Natural killer cell (primary cell): ENCODE measurements at regions of chr2 and their contacts with region 1.

Region 1: GRCh38 chr2:64750817-64751285 is 97.1 kb upstream of the SERTAD2 start:
- DNase-seq: peak; percentile 97 to 99
- ATAC-seq: peak; percentile 77 to 92 (median 81)
- H3K4me3 ChIP-seq: peak overlapping the region; percentile 47
- H3K4me3 Mint-ChIP-seq: peak overlapping the region; percentile 96
- H3K27ac ChIP-seq: peak overlapping the region; percentile 95
- H3K27ac Mint-ChIP-seq: peak overlapping the region; percentile 77 to 96
- H3K4me1 ChIP-seq: peaks cover 5% of the 10 kb centered on the region
- H3K4me1 Mint-ChIP-seq: peaks cover 12 to 16% of the 10 kb centered on the region in 2 donors
- H3K27me3 ChIP-seq: no peaks in the 10 kb centered on the region
- H3K27me3 Mint-ChIP-seq: no peaks in the 10 kb centered on the region
- CTCF ChIP-seq: no peak

Region 2: DNA sequence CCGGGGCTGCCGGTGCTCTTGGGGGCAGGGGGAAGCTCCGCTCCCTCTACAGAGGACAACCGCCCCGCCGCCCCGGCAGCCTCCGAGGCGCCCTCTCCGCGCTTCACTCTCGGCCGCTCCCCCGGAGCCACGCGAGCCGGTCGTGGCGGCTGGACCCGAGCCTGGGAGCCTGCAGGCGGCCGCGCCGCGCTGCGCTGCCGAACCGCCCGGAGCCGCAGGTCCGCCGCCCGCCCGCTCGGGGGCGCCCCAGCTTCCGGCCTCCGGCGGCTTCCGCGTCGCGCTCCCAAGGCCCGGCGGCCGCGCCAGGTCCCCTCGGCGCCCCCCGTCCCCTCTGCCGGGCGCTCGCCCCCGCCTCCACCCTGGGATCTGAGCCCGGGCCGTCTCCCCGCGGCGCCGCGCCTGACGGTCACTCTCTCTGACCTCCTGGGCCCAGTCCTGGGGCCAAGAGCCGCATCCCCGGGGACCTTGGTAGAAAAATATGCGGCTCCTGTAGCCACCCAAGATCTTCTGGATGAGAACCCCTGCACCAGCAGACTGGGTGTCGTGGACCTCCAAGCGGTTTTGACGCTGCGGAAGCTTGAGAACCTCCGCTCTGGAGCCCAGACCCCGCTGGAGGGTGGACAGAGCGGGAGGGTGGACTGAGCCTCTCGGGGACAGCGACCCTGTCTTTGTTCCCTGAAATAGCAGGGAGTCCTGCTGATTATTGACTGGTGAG is 141.5 kb before region 1 on chr2:
- intact Hi-C with region 1: loop called (anchors 5 kb)
- DNase-seq: peak; percentile 80 to 86
- ATAC-seq: peak; percentile 75 to 86 (median 77)
- H3K4me3 ChIP-seq: peak overlapping the region; percentile 60
- H3K4me3 Mint-ChIP-seq: peak overlapping the region; percentile 85
- H3K27ac ChIP-seq: peak overlapping the region; percentile 69
- H3K27ac Mint-ChIP-seq: peak overlapping the region; percentile 77 to 89
- H3K4me1 ChIP-seq: peaks cover 35% of the 10 kb centered on the region
- H3K4me1 Mint-ChIP-seq: peaks cover 19 to 28% of the 10 kb centered on the region in 2 donors
- H3K27me3 ChIP-seq: no peaks in the 10 kb centered on the region
- H3K27me3 Mint-ChIP-seq: no peaks in the 10 kb centered on the region
- CTCF ChIP-seq: peak; percentile 34

Region 3: DNA sequence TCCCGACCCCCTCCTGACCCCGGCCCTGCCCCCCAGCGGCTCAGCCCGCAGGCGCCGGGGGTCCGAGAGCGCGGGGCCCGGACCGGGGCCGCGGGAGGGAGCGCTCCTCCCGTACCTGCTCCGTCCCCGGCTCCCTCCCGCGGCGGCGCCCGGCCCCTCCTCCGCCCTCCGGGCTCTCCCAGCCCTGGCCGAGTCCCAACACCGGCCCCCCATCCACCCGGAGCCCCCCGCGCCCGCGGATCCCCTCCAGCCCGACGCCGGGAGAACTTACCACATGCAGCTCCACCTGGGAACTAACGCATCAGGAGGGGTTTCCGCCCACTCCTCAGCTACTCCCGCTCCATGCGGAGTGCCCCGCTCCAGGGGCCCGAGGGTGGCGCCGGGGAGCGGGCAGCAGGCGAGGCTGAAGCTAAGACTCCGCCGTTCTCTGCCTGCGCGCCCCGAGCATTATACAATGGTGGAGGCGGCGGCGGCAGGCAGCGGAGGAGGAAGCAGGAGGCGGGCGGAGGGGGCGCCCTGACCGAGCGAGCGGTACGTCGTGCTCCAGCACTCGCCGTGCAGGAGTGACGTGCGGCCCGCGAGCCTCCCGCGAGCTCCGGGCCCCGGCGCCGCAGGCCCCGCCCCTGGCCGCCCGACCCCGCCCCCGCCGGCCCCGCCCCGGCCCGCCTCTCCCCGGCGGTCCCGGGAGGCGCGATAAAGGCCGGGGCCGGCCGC is 97.3 kb before region 1 on chr2 and contains the start of gene SERTAD2:
- intact Hi-C with region 1: loop called (anchors 2 kb)
- DNase-seq: peak; percentile 80 to 94
- ATAC-seq: peak; percentile 81 to 93 (median 87)
- H3K4me3 ChIP-seq: peak within 1 kb of the TSS; percentile 99
- H3K4me3 Mint-ChIP-seq: peak within 1 kb of the TSS; percentile 93
- H3K27ac ChIP-seq: peak within 1 kb of the TSS; percentile 98
- H3K27ac Mint-ChIP-seq: peak within 1 kb of the TSS; percentile 85 to 87
- H3K4me1 ChIP-seq: peaks cover 28% of the 10 kb centered on the region
- H3K4me1 Mint-ChIP-seq: peaks cover 34 to 40% of the 10 kb centered on the region in 2 donors
- H3K27me3 ChIP-seq: no peaks in the 10 kb centered on the region
- H3K27me3 Mint-ChIP-seq: no peaks in the 10 kb centered on the region
- CTCF ChIP-seq: no peak
- total RNA-seq, gene SERTAD2: 45.6 to 71.2 (median 55.8) TPM

Region 4: DNA sequence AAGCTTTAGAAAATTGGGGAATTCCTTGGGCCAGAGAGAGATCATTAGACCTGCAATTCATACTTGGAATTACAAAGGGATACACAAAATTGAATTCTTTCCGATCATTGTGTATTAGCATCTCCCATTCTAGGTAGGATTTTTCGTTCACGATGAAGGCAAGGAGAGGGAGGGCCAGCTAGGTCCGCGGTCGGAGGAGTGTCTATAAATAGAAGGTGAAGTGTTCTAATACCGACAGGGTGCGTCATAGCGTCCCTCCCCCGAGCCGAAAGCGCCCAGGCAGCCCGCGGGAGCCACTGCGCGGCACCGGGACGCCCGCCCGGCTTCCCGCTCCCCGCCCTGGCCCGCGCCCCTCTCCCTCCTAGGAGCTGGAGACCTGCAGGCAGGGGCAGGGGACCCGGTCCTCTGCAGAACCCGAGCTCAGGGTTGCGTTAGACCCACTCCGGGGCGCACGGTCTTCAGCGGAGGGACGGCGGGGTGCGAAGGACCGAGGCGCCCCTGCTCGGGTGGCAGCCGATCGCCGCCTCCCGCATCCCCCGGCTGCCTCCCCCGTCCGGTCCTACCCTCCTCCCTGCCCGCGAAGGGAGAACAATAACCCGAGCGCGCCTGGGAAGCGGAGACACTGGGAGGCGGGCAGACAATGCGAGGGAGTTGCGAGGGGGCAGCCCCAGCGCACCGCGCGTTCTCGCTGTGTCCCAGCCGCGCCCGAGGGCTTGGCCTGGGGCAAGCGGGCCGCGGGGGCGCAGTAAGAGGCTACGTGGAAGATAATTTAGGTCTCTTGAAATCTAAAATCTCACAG is 17.0 kb after region 1 on chr2:
- intact Hi-C with region 1: loop called (anchors 1 kb)
- DNase-seq: peak; percentile 77 to 87
- ATAC-seq: peak; percentile 85 to 92 (median 92)
- H3K4me3 ChIP-seq: peak overlapping the region; percentile 76
- H3K4me3 Mint-ChIP-seq: peak overlapping the region; percentile 96
- H3K27ac ChIP-seq: peak overlapping the region; percentile 95
- H3K27ac Mint-ChIP-seq: peak overlapping the region; percentile 88 to 96
- H3K4me1 ChIP-seq: peaks cover 4% of the 10 kb centered on the region
- H3K4me1 Mint-ChIP-seq: peaks cover 20 to 29% of the 10 kb centered on the region in 2 donors
- H3K27me3 ChIP-seq: no peaks in the 10 kb centered on the region
- H3K27me3 Mint-ChIP-seq: peaks cover 4 to 13% of the 10 kb centered on the region in 2 donors
- CTCF ChIP-seq: no peak

Region 5: GRCh38 chr2:64831134-64831976 is 80.5 kb after region 1 on chr2:
- intact Hi-C with region 1: loop called (anchors 1 kb)
- DNase-seq: peak; percentile 70 to 89
- ATAC-seq: peak; percentile 88 to 90 (median 90)
- H3K4me3 ChIP-seq: no peak overlapping the region
- H3K4me3 Mint-ChIP-seq: no peak overlapping the region
- H3K27ac ChIP-seq: no peak overlapping the region
- H3K27ac Mint-ChIP-seq: no peak overlapping the region
- H3K4me1 ChIP-seq: peaks cover 9% of the 10 kb centered on the region
- H3K4me1 Mint-ChIP-seq: no peaks in the 10 kb centered on the region
- H3K27me3 ChIP-seq: no peaks in the 10 kb centered on the region
- H3K27me3 Mint-ChIP-seq: peaks cover 8 to 14% of the 10 kb centered on the region in 2 donors
- CTCF ChIP-seq: peak; percentile 98